ENCODE measurements at regions of chr4 and their contacts with region 1.

Region 1: GRCh38 chr4:36399762-36400353 is 118.4 kb downstream of the DTHD1 start:
- DNase-seq: peak; percentile 74
- ATAC-seq: peak; percentile 76
- H3K4me3 Mint-ChIP-seq: no peak overlapping the region
- H3K27ac Mint-ChIP-seq: no peak overlapping the region
- H3K4me1 Mint-ChIP-seq: peaks cover 9% of the 10 kb centered on the region
- H3K27me3 Mint-ChIP-seq: peaks cover 5% of the 10 kb centered on the region
- CTCF ChIP-seq: peak; percentile 88

Region 2: GRCh38 chr4:36208893-36209473 is 190.9 kb before region 1 on chr4:
- CTCF ChIA-PET with region 1: interaction called, 11 read pairs
- POLR2A ChIA-PET with region 1: no interaction called
- intact Hi-C with region 1: no loop called
- DNase-seq: peak; percentile 75
- ATAC-seq: peak; percentile 86
- H3K4me3 Mint-ChIP-seq: peak overlapping the region; percentile 43
- H3K27ac Mint-ChIP-seq: peak overlapping the region; percentile 89
- H3K4me1 Mint-ChIP-seq: peaks cover 62% of the 10 kb centered on the region
- H3K27me3 Mint-ChIP-seq: no peaks in the 10 kb centered on the region
- CTCF ChIP-seq: no peak

Region 3: GRCh38 chr4:36332023-36332781 is 67.7 kb before region 1 on chr4:
- CTCF ChIA-PET with region 1: interaction called, 12 read pairs
- POLR2A ChIA-PET with region 1: no interaction called
- intact Hi-C with region 1: no loop called
- DNase-seq: peak; percentile 26
- ATAC-seq: peak; percentile 76
- H3K4me3 Mint-ChIP-seq: no peak overlapping the region
- H3K27ac Mint-ChIP-seq: no peak overlapping the region
- H3K4me1 Mint-ChIP-seq: peaks cover 24% of the 10 kb centered on the region
- H3K27me3 Mint-ChIP-seq: no peaks in the 10 kb centered on the region
- CTCF ChIP-seq: no peak

Region 4: GRCh38 chr4:36351082-36351666 is 48.7 kb before region 1 on chr4:
- CTCF ChIA-PET with region 1: interaction called, 86 read pairs
- POLR2A ChIA-PET with region 1: interaction called, 5 read pairs
- intact Hi-C with region 1: loop called (anchors 1 kb)
- DNase-seq: peak; percentile 91
- ATAC-seq: peak; percentile 65
- H3K4me3 Mint-ChIP-seq: no peak overlapping the region
- H3K27ac Mint-ChIP-seq: no peak overlapping the region
- H3K4me1 Mint-ChIP-seq: peaks cover 32% of the 10 kb centered on the region
- H3K27me3 Mint-ChIP-seq: no peaks in the 10 kb centered on the region
- CTCF ChIP-seq: peak; percentile 92

Region 5: GRCh38 chr4:36385951-36386571 is 13.8 kb before region 1 on chr4:
- CTCF ChIA-PET with region 1: interaction called, 34 read pairs
- POLR2A ChIA-PET with region 1: interaction called, 3 read pairs
- intact Hi-C with region 1: no loop called
- DNase-seq: peak; percentile 59
- ATAC-seq: peak; percentile 93
- H3K4me3 Mint-ChIP-seq: peak overlapping the region; percentile 4
- H3K27ac Mint-ChIP-seq: peak overlapping the region; percentile 68
- H3K4me1 Mint-ChIP-seq: peaks cover 19% of the 10 kb centered on the region
- H3K27me3 Mint-ChIP-seq: no peaks in the 10 kb centered on the region
- CTCF ChIP-seq: no peak